Activated CD4-positive, alpha-beta memory T cell treated with anti-CD3 and anti-CD28 coated beads for 36 hours (primary cell): ENCODE measurements at regions of chr19 and their contacts with region 1.

Region 1: DNA sequence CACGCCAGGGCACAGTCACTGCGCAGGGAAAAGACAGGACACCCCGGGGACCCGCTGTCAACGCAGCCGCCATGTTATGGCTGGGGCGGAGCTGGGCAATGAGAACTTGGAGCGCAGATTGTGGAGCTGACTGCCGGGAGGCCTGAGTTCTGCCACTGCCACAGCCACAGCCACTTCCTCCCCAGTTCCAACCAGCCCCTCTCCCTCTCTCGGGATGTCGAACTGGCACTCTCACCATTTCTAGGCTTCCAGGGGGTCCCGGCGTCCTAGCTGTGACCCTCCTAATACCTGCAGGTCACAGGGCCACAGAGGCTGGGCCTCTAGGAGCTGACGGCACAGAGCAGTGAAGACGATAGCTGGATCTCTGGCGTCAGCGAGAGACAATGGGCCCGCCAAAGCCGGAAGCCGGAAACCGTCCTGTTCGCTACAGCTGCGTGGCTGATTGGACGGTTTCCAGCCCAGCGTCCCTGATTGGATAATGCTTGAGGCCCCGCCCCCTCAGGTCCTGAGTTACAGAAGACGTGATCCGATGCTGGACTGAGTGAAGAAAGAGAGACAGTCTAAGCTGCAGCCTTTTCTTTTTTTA is at the start of gene ZNF506:
- DNase-seq: peak; percentile 99
- H3K4me3 Mint-ChIP-seq: peak within 1 kb of the TSS; percentile 97
- H3K27ac Mint-ChIP-seq: peak within 1 kb of the TSS; percentile 97
- H3K4me1 Mint-ChIP-seq: peaks cover 39% of the 10 kb centered on the region
- H3K27me3 Mint-ChIP-seq: no peaks in the 10 kb centered on the region
- total RNA-seq, gene ZNF506: 32.9 to 39.3 TPM

Region 2: DNA sequence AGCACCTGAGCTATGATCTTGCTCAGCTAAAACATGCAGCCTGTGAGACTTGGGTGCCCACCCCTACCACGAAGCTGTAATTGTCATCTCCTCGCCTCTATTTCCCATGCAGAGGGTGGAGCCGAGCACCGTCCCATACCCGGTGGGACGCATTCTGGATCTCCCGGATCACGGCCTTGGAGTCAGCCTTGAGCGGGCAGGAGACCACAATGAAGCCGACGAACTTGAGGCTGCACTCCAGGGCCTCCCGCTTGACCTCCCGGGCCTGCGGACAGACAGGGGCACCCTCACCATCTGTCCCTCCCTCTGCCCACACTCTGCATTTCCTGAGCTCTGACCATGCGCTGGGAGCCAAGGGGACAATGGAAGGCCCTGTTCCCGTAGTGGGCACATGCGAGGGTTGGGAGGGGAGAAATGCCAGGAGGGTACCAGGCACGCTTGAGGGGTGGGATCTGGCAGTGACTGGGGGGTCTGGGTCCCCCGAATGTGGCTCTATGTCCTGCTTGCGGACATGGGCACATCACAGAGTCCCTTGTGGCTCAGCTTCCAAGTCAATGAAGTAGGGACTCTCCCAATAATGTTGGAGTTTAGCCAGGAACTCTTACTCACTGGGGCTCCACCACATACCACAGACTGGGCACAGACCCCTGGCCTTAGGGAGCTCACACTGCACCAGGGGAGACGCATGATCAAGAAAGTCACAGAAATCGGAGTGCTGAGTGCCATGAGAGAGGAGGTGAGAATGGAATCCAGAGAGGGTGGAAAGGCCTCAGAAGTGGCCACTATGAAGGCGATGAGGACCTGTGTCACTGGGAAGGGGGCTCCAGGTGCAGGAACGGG is 168.8 kb before region 1 on chr19:
- CTCF ChIA-PET with region 1: no interaction called
- POLR2A ChIA-PET with region 1: no interaction called
- intact Hi-C with region 1: no loop called
- DNase-seq: no peak
- H3K4me3 Mint-ChIP-seq: no peak overlapping the region
- H3K27ac Mint-ChIP-seq: no peak overlapping the region
- H3K4me1 Mint-ChIP-seq: no peaks in the 10 kb centered on the region
- H3K27me3 Mint-ChIP-seq: no peaks in the 10 kb centered on the region

Region 3: GRCh38 chr19:19732579-19733501 is 88.6 kb before region 1 on chr19 and contains the start of gene ZNF14:
- CTCF ChIA-PET with region 1: interaction called, 5 read pairs
- POLR2A ChIA-PET with region 1: interaction called, 8 read pairs
- intact Hi-C with region 1: loop called (anchors 2 kb)
- DNase-seq: peak; percentile 96
- H3K4me3 Mint-ChIP-seq: peak within 1 kb of the TSS; percentile 99
- H3K27ac Mint-ChIP-seq: peak within 1 kb of the TSS; percentile 94
- H3K4me1 Mint-ChIP-seq: peaks cover 17% of the 10 kb centered on the region
- H3K27me3 Mint-ChIP-seq: no peaks in the 10 kb centered on the region
- total RNA-seq, gene ZNF14: 6.8 to 7.9 TPM

Region 4: DNA sequence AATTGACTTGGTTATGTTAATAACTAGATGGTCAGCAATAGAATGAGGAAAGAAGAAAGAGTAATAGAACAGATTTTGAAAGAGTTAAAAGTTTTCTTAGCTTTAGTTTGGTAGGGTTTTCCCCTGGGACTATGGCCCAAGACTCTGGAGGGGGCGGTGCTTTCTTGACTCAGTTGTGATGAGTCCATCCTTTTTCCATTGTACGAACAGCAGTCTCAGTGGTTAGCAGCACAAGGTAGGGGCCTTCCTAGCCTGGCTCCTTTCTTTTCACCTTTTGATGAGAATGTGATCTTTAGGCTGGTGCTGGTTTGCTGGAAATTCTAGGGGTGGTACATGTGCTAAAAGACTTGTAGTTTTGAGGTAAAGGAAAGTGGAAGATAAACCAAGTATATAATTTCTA is 38.7 kb before region 1 on chr19:
- CTCF ChIA-PET with region 1: no interaction called
- POLR2A ChIA-PET with region 1: interaction called, 11 read pairs
- intact Hi-C with region 1: no loop called
- DNase-seq: peak; percentile 73
- H3K4me3 Mint-ChIP-seq: no peak overlapping the region
- H3K27ac Mint-ChIP-seq: peak overlapping the region; percentile 80
- H3K4me1 Mint-ChIP-seq: peaks cover 48% of the 10 kb centered on the region
- H3K27me3 Mint-ChIP-seq: no peaks in the 10 kb centered on the region

Region 5: DNA sequence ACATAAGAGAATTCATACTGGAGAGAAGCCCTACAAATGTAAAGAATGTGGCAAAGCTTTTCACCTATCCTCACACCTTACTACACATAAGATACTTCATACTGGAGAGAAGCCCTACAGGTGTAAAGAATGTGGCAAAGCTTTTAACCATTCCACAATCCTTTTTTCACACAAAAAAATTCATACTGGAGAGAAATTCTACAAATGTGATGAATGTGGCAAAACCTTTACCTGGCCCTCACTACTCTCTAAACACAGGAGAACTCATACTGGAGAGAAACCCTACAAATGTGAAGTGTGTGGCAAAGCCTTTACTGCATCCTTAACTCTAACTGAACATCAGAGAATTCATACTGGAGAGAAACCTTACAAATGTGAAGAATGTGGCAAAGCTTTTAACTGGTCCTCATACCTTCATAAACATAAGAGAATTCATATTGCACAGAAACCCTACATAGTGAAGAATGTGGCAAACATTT is 14.1 kb after region 1 on chr19:
- CTCF ChIA-PET with region 1: no interaction called
- POLR2A ChIA-PET with region 1: no interaction called
- intact Hi-C with region 1: no loop called
- DNase-seq: no peak
- H3K4me3 Mint-ChIP-seq: no peak overlapping the region
- H3K27ac Mint-ChIP-seq: no peak overlapping the region
- H3K4me1 Mint-ChIP-seq: no peaks in the 10 kb centered on the region
- H3K27me3 Mint-ChIP-seq: no peaks in the 10 kb centered on the region

Region 6: DNA sequence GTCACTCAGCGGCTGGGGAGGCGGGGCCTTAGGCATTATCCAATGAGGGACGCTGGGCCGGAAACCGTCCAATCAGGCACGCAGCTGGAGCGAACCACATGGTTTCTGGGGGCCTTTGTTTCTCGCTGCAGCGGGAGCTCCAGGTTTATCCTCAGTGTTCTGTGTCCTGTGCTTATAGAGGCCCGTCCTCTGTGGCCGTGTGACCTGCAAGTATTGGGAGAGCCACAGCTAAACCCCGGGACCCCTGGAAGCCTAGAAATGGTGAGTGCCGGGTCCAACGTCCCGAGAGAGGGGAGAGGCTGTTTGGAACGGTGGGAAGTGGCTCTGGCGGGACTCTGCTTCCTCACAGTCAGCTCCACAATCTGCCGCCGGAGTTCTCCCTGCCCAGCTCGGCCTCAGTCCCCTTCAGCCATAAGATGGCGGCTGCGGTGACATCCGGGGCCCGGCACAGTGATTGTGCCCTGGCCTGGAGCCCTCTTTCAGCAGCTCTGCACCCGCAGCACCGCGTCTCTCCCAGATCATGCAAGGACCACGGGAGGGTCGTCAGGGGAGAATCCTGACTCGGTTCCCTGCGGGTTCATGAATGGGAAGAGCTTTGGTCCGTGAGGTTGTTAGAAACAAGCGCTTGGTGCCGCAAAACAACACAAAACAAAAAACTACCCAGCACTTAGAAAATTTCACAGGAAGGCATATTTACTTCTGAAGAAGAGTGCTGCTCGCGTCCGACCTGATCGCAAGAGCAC is 44.5 kb after region 1 on chr19 and contains the start of gene ZNF253:
- CTCF ChIA-PET with region 1: interaction called, 3 read pairs
- POLR2A ChIA-PET with region 1: interaction called, 49 read pairs
- intact Hi-C with region 1: loop called (anchors 1 kb)
- DNase-seq: peak; percentile 98
- H3K4me3 Mint-ChIP-seq: peak within 1 kb of the TSS; percentile 99
- H3K27ac Mint-ChIP-seq: peak within 1 kb of the TSS; percentile 98
- H3K4me1 Mint-ChIP-seq: peaks cover 19% of the 10 kb centered on the region
- H3K27me3 Mint-ChIP-seq: no peaks in the 10 kb centered on the region
- total RNA-seq, gene ZNF253: 11.0 to 12.9 TPM

Region 7: GRCh38 chr19:19900729-19901444 is 79.4 kb after region 1 on chr19 and contains the start of gene ZNF93:
- CTCF ChIA-PET with region 1: interaction called, 4 read pairs
- POLR2A ChIA-PET with region 1: interaction called, 29 read pairs
- intact Hi-C with region 1: loop called (anchors 1 kb)
- DNase-seq: peak; percentile 96
- H3K4me3 Mint-ChIP-seq: peak within 1 kb of the TSS; percentile 98
- H3K27ac Mint-ChIP-seq: peak within 1 kb of the TSS; percentile 96
- H3K4me1 Mint-ChIP-seq: peaks cover 35% of the 10 kb centered on the region
- H3K27me3 Mint-ChIP-seq: no peaks in the 10 kb centered on the region
- total RNA-seq, gene ZNF93: 15.6 to 17.0 TPM